ENCODE measurements at regions of chr1 and their contacts with region 1.

Region 1: GRCh38 chr1:8097077-8097799 is 71.1 kb upstream of the ERRFI1 start:
- DNase-seq: peak; percentile 98
- ATAC-seq: peak; percentile 85
- H3K4me3 ChIP-seq: peak overlapping the region in 1 of 2 experiments; percentile 17; a peak in 1 of 4 replicates
- H3K27ac ChIP-seq: peak overlapping the region; percentile 97
- H3K4me1 ChIP-seq: peaks cover 75 to 83% of the 10 kb centered on the region in 2 experiments
- H3K27me3 ChIP-seq: no peaks in the 10 kb centered on the region
- CTCF ChIP-seq: no peak
- POLR2A ChIP-seq: no peak
- RAD21 ChIP-seq: no peak

Region 2: DNA sequence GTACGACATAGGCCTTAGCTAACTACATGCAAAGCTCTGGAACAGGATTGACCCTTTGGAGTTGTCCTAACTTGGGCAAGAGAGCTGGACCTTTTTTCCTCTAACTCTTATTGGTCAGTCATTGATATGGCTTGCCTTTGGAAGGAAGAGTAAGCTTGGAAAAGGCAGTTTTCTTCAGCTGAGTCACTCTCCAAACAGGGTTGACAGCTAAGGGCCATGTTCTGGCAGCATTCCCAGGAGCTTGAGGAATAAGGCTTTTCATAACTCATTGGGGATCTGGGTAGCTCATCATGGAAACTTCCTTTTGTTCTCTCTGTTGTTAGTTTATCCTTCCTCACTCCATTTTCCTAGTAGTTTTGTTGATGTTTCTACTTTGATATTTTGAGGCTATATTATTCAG is 56.7 kb before region 1 on chr1:
- CTCF ChIA-PET with region 1: interaction called, 3 read pairs
- POLR2A ChIA-PET with region 1: interaction called, 12 read pairs
- RAD21 ChIA-PET with region 1: no interaction called
- intact Hi-C with region 1: no loop called
- DNase-seq: peak; percentile 99
- ATAC-seq: peak; percentile 81
- H3K4me3 ChIP-seq: no peak overlapping the region
- H3K27ac ChIP-seq: peak overlapping the region; percentile 96
- H3K4me1 ChIP-seq: peaks cover 79 to 89% of the 10 kb centered on the region in 2 experiments
- H3K27me3 ChIP-seq: no peaks in the 10 kb centered on the region
- CTCF ChIP-seq: no peak
- POLR2A ChIP-seq: no peak
- RAD21 ChIP-seq: peak; percentile 45

Region 3: DNA sequence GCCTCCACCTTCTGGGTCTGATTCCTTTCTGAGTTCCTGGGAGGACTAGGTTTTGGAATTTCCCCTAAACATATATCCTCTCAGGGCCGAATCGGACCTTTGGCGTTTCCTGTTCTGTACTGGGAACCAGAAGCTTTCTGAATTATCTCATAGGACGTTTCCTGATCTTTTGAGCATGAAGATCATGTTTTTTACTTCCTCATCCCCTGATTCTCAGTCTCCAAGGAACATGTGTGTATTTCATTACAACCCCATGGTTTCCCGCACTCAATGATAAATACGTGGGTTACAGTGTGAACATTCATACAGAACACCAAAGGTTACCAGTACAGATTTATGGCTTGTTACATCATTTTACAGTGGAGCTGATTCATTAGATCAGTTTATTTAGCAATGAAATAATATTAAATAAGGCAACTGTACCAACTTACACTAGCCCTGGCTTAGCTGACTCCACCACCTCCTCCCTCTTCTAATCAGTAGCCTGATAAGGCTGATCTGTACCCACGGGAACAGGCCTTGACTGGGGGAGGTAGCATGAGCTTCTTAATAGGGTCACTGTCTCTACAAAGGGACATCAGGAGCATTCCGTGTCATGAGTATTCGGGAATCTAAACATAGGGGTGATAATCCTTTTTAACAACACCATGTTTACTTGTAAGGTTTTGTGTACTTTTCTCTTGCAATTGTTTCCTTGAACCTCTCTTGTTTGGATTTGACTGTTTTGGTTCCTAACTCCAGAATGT is 13.3 kb before region 1 on chr1:
- CTCF ChIA-PET with region 1: interaction called, 3 read pairs
- POLR2A ChIA-PET with region 1: interaction called, 40 read pairs
- RAD21 ChIA-PET with region 1: no interaction called
- intact Hi-C with region 1: no loop called
- DNase-seq: no peak
- ATAC-seq: no peak
- H3K4me3 ChIP-seq: no peak overlapping the region
- H3K27ac ChIP-seq: peak overlapping the region; percentile 97
- H3K4me1 ChIP-seq: peaks cover 88 to 99% of the 10 kb centered on the region in 2 experiments
- H3K27me3 ChIP-seq: no peaks in the 10 kb centered on the region
- CTCF ChIP-seq: no peak
- POLR2A ChIP-seq: no peak
- RAD21 ChIP-seq: no peak

Region 4: GRCh38 chr1:8154621-8155052 is 57.4 kb after region 1 on chr1:
- CTCF ChIA-PET with region 1: no interaction called
- POLR2A ChIA-PET with region 1: interaction called, 10 read pairs
- RAD21 ChIA-PET with region 1: interaction called in 1 of 2 experiments, 3 read pairs
- intact Hi-C with region 1: no loop called
- DNase-seq: peak; percentile 85
- ATAC-seq: peak; percentile 84
- H3K4me3 ChIP-seq: peak overlapping the region in 1 of 2 experiments; percentile 33; a peak in 2 of 4 replicates
- H3K27ac ChIP-seq: peak overlapping the region; percentile 85
- H3K4me1 ChIP-seq: peaks cover 37 to 38% of the 10 kb centered on the region in 2 experiments
- H3K27me3 ChIP-seq: no peaks in the 10 kb centered on the region
- CTCF ChIP-seq: no peak
- POLR2A ChIP-seq: no peak
- RAD21 ChIP-seq: peak; percentile 16; the same call in 1 of the 2 replicates

Region 5: GRCh38 chr1:8182034-8182761 is 85.0 kb after region 1 on chr1:
- CTCF ChIA-PET with region 1: no interaction called
- POLR2A ChIA-PET with region 1: interaction called, 8 read pairs
- RAD21 ChIA-PET with region 1: no interaction called
- intact Hi-C with region 1: loop called (anchors 5 kb)
- DNase-seq: peak; percentile 96
- ATAC-seq: peak; percentile 85
- H3K4me3 ChIP-seq: peak overlapping the region in 1 of 2 experiments; percentile 23; a peak in 2 of 4 replicates
- H3K27ac ChIP-seq: peak overlapping the region; percentile 97
- H3K4me1 ChIP-seq: peaks cover 41 to 59% of the 10 kb centered on the region in 2 experiments
- H3K27me3 ChIP-seq: no peaks in the 10 kb centered on the region
- CTCF ChIP-seq: no peak
- POLR2A ChIP-seq: no peak
- RAD21 ChIP-seq: no peak

Region 6: DNA sequence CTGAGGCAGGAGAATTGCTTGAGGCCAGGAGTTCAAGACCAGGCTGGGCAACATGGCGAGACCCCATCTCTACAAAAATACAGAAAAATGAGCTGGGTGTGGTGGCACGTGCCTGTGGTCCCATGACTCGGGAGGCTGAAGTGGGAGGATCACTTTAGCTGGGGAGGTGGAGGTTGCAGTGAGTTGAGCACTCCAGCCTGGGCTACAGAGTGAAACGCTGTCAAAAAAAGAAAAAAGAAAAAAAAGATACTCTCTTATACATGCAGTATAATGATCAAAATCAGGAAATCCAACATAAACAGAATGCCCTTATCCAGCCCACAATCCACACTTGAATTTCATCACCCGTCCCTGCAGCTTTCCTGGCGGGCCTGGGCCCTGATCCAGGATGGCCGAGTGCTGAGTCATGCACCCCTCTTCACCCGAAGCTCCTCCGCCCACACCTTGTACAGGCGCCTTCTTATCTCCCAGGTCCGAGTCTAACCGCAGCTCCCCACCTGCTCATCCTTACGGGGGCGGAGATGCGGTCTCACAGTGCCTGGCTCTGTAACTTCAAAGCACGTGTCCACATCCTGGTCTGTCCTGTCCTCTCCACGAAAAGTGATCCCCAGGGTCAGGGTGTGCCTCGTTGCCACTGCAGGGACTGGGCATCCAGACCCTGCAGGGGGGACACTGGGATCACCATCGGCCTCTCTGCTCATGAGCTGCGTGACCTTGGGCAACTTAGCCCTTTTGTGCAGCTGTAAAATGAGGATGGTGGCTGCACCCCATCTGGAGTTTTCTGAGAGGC is 100.5 kb after region 1 on chr1:
- CTCF ChIA-PET with region 1: no interaction called
- POLR2A ChIA-PET with region 1: interaction called, 13 read pairs
- RAD21 ChIA-PET with region 1: interaction called in 1 of 2 experiments, 3 read pairs
- intact Hi-C with region 1: no loop called
- DNase-seq: peak; percentile 97
- ATAC-seq: peak; percentile 74
- H3K4me3 ChIP-seq: no peak overlapping the region
- H3K27ac ChIP-seq: peak overlapping the region; percentile 91
- H3K4me1 ChIP-seq: peaks cover 87 to 99% of the 10 kb centered on the region in 2 experiments
- H3K27me3 ChIP-seq: no peaks in the 10 kb centered on the region
- CTCF ChIP-seq: no peak
- POLR2A ChIP-seq: peak; percentile 26
- RAD21 ChIP-seq: no peak

Measured in HCT116 (cell line).